Motor neuron (in vitro differentiated cells): ENCODE measurements at regions of chr2 and their contacts with region 1.

Region 1: GRCh38 chr2:219002395-219003266 is 9.4 kb upstream of the CRYBA2 start:
- ATAC-seq: peak; percentile 56 to 89 (median 67)
- H3K4me3 ChIP-seq: peak overlapping the region; percentile 7 to 21 (median 17)
- H3K27ac ChIP-seq: no peak overlapping the region
- H3K4me1 ChIP-seq: peaks cover 5 to 10% of the 10 kb centered on the region in 2 donors

Region 2: DNA sequence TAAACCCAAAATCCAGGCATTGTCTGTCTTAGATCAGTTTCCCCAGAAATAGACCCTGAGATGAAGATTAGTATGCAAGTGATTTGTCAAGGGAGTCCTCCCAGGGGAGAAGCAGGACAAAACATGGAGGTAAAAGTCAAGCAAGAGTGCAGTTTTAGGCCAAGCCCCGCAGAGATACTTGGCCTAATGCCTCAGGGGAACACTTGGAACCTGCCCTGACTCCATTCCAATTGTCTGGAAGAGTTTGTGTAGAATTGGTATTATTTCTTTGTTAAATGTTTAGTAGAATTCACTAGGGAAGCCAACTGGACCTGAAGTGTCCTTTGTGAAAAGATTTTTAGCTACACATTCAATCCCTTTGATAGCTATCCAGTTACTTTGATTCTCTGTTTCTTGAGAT is 87.6 kb before region 1 on chr2:
- in situ Hi-C with region 1: no loop called
- ATAC-seq: no peak
- H3K4me3 ChIP-seq: no peak overlapping the region
- H3K27ac ChIP-seq: no peak overlapping the region
- H3K4me1 ChIP-seq: no peaks in the 10 kb centered on the region

Region 3: DNA sequence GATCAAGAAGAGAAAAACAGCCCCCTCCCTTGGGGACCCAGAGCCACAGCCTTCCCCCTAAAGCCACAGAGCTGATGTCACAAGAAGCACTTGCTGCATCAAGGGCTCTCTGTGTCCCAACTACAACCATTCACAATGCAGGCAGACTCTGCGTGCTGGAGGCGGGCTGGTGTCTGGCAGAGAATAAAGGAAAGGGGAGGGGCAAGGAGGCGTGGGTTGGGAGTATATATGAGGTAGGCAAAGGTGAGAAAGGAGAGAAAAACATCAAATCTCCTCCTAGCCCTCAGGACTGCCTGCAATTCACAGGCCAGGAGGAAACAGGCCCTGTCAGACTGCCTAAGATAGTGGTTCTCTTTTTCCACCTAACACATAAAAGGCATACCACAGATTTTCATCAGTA is 106.8 kb after region 1 on chr2:
- in situ Hi-C with region 1: no loop called
- ATAC-seq: peak in 5 of 8 experiments; percentile 48 to 79 (median 68)
- H3K4me3 ChIP-seq: no peak overlapping the region
- H3K27ac ChIP-seq: no peak overlapping the region
- H3K4me1 ChIP-seq: no peaks in the 10 kb centered on the region

Region 4: DNA sequence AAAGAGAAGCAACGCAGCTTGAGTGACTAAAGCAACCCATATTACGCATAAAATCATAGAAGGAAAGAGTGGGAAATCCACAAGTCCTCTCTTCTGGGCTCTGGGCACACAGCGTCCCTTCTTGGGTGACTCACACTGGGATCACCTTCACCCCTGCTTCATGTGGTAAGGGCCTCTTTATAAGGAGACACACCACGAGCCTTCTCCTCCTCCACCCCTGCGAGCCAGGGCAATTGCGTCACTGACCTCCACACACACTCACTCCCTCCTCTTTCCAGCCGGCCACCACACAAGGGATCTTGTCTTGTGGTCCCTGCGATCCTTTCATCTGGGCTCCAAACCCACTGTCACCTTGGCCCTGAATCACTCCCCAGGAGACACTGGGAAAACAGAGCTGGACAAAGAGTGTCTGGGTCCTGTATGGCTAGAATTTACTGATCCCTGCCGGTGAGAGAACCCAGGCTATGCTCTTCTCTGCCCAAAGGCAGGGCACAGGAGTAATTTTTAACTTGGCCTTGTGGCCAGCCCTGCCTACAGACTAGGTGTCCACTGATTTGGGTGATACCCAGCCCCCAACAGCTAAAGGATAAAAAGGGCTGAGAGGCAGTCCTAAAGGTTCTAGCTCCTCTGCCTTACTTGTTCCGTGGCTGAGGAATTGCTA is 122.7 kb after region 1 on chr2:
- in situ Hi-C with region 1: loop called in 1 of 9 experiments (anchors 25 kb)
- ATAC-seq: peak in 2 of 8 experiments; percentile 15 to 43
- H3K4me3 ChIP-seq: no peak overlapping the region
- H3K27ac ChIP-seq: no peak overlapping the region
- H3K4me1 ChIP-seq: no peaks in the 10 kb centered on the region